ENCODE measurements at regions of chr1 and their contacts with region 1.

Region 1: GRCh38 chr1:210584439-210585113 is 255.9 kb downstream of the HHAT start:
- DNase-seq: peak; percentile 71
- ATAC-seq: peak; percentile 81 to 85
- H3K4me3 ChIP-seq: no peak overlapping the region
- H3K27ac ChIP-seq: no peak overlapping the region
- H3K4me1 ChIP-seq: no peaks in the 10 kb centered on the region
- H3K27me3 ChIP-seq: no peaks in the 10 kb centered on the region
- CTCF ChIP-seq: peak; percentile 60

Region 2: DNA sequence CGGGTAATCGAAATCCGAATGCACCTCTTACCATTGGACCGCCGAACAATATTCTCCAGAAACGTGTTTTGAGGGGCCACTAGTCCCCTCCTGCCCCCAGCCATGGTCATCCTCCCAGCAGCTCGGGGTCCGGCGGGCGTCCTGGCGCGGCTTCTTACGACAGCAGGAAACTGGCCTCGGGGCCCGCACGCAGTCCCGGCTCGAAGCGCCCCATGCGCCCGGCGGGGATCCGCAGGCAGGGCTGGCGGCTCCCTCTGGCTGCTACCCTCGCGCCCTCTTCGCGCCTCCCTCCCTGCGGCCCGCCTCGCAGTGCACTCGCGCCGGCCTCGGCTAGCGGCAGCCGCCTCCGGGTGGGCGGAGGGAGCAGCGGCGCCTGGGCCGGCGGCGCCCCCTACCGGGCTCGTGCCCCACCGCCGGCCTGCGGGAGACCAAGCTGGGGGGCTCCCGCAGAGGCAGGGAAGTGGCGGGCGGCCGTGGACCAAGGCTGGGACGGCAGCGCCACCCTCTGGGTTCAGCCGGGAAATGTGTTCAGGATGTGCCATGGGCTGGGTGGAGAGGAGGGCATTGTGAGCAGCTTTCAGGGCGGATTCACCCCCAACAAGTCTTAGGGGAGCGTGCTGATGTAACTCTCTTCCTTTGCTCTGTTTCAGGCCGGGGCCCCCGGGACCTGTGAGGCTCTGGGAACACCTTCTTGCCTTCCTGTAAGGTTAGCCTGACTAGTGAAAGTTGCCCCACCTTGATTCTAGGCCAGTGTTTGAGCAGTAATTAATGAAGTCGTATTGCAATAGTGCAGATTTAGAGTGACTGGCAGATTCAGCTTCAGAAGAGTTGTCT is 549.5 kb after region 1 on chr1 and contains the start of gene KCNH1:
- intact Hi-C with region 1: loop called (anchors 10 kb)
- DNase-seq: peak; percentile 67
- ATAC-seq: peak; percentile 94 to 96
- H3K4me3 ChIP-seq: peak within 1 kb of the TSS; percentile 54
- H3K27ac ChIP-seq: no peak within 1 kb of the TSS
- H3K4me1 ChIP-seq: peaks cover 8% of the 10 kb centered on the region
- H3K27me3 ChIP-seq: peaks cover 41% of the 10 kb centered on the region
- CTCF ChIP-seq: peak; percentile 81
- total RNA-seq, gene KCNH1: not detected